Activated naive CD4-positive, alpha-beta T cell treated with anti-CD3 and anti-CD28 coated beads for 36 hours (primary cell): ENCODE measurements at regions of chr13 and their contacts with region 1.

Region 1: GRCh38 chr13:33349986-33350826 is 64.7 kb upstream of the STARD13 start:
- DNase-seq: no peak
- H3K4me3 Mint-ChIP-seq: no peak overlapping the region
- H3K27ac Mint-ChIP-seq: no peak overlapping the region
- H3K4me1 Mint-ChIP-seq: peaks cover 2% of the 10 kb centered on the region
- H3K27me3 Mint-ChIP-seq: peaks cover 46% of the 10 kb centered on the region

Region 2: DNA sequence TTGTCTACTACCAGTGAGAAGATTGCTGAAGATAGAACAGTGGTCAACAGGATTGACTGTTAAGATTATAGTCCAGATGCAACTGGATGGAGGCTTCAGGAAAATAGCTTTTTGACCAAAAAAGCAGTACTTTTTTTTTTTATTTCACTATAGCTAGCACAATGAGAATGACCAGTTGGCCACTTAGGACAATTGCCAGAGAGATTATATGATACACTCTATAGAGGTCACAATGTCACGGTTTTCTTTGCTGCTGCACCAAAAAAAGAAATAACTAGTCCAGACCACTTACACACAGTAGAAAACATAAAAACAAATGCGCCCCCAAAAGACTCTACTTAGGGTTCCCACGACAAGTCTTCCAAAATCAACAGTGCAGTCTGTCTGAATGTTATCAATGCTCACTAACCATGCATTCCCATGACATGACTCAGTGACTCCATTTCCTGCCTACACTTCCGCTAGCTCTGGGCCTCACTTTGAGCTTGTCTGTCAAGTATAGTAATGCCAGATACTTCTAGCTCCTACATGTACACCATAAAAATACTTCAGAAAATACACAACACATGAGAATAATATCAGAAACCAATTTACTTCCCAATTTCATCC is 144.5 kb after region 1 on chr13:
- CTCF ChIA-PET with region 1: no interaction called
- intact Hi-C with region 1: loop called (anchors 10 kb)
- DNase-seq: no peak
- H3K4me3 Mint-ChIP-seq: no peak overlapping the region
- H3K27ac Mint-ChIP-seq: no peak overlapping the region
- H3K4me1 Mint-ChIP-seq: no peaks in the 10 kb centered on the region
- H3K27me3 Mint-ChIP-seq: peaks cover 4% of the 10 kb centered on the region